ENCODE measurements at regions of chr19 and their contacts with region 1.

Region 1: GRCh38 chr19:56507446-56508289 is at the start of gene ZNF471:
- DNase-seq: peak; percentile 94 to 96
- ATAC-seq: peak; percentile 100
- H3K4me3 ChIP-seq: peak within 1 kb of the TSS; percentile 68 to 86 (median 78)
- H3K27ac ChIP-seq: peak within 1 kb of the TSS; percentile 87 to 97 (median 94)
- H3K4me1 ChIP-seq: peaks cover 5 to 10% of the 10 kb centered on the region in 2 donors
- H3K27me3 ChIP-seq: no peaks in the 10 kb centered on the region
- CTCF ChIP-seq: no peak
- POLR2A ChIP-seq: no peak
- total RNA-seq, gene ZNF471: 0.56 to 3.8 (median 3.2) TPM

Region 2: GRCh38 chr19:56140583-56141416 is 366.9 kb before region 1 on chr19 and contains the start of gene ZNF444:
- in situ Hi-C with region 1: no loop called
- intact Hi-C with region 1: loop called (anchors 2 kb)
- DNase-seq: peak; percentile 98 to 99
- ATAC-seq: peak; percentile 96
- H3K4me3 ChIP-seq: peak within 1 kb of the TSS; percentile 57 to 76 (median 60)
- H3K27ac ChIP-seq: peak within 1 kb of the TSS; percentile 84 to 89 (median 86)
- H3K4me1 ChIP-seq: peaks cover 11 to 21% of the 10 kb centered on the region in 2 donors
- H3K27me3 ChIP-seq: no peaks in the 10 kb centered on the region
- CTCF ChIP-seq: no peak
- POLR2A ChIP-seq: peak; percentile 52 to 54
- total RNA-seq, gene ZNF444: 16.4 to 38.9 (median 24.9) TPM

Region 3: GRCh38 chr19:56477429-56478338 is 30.0 kb before region 1 on chr19:
- in situ Hi-C with region 1: no loop called
- intact Hi-C with region 1: loop called (anchors 1 kb)
- DNase-seq: peak; percentile 71 to 73
- ATAC-seq: peak; percentile 87 to 95
- H3K4me3 ChIP-seq: peak overlapping the region; percentile 46 to 83 (median 69)
- H3K27ac ChIP-seq: peak overlapping the region; percentile 54 to 86 (median 83)
- H3K4me1 ChIP-seq: peaks cover 0 to 5% of the 10 kb centered on the region in 2 donors
- H3K27me3 ChIP-seq: no peaks in the 10 kb centered on the region
- CTCF ChIP-seq: no peak
- POLR2A ChIP-seq: peak; percentile 31 to 42

Region 4: DNA sequence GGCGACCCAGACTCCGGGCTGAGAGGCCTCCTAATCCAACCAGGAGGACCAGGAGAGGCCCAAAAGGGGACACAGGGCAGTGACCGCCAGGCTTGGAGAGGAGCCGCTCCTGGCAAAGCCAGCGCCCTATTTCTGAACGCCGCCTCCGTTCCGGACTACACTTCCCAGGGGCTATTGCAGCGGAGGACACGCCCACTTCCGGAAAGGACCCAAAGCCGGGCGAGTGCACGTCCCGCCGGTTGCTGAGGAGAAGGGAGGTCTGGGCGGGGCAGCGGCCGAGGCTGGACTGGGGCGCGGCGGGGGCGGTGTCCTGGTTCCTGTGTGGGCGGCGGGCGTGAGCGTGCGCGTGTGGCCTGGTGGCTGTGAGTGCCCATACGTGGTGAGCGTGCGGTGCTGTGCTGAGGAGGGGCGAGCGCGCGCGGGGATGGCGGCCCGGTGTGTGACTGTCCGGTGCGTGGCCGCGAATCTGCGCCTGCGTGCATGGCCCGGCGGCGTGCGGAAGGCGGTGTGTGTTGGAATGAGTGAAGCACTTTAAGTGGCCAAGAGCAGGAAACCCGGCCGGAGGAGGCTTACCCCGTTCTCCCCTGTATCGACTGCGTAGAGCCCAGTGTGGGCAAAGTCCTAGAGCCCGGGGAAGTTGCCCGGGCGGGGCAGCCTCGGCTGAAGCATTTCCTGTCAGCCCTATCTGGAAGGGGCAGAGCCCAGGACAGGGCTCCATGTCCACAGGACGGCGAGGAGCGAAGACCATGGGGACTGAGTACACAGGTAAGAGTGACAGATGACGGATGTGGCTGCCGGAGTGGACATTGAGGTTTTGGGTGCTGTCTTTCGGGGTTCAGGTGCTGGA is 59.8 kb after region 1 on chr19 and contains the start of gene ZNF470:
- in situ Hi-C with region 1: no loop called
- intact Hi-C with region 1: loop called (anchors 1 kb)
- DNase-seq: peak; percentile 90 to 92
- ATAC-seq: peak; percentile 99
- H3K4me3 ChIP-seq: peak within 1 kb of the TSS; percentile 80 to 98 (median 85)
- H3K27ac ChIP-seq: peak within 1 kb of the TSS; percentile 83 to 91 (median 86)
- H3K4me1 ChIP-seq: peaks cover 13 to 14% of the 10 kb centered on the region in 2 donors
- H3K27me3 ChIP-seq: no peaks in the 10 kb centered on the region
- CTCF ChIP-seq: peak in 1 of 5 experiments; percentile 5
- POLR2A ChIP-seq: peak; percentile 46 to 50
- total RNA-seq, gene ZNF470: 0.32 to 2.0 (median 0.83) TPM

Region 5: GRCh38 chr19:57632987-57633831 is 1125.5 kb after region 1 on chr19 and contains the start of gene ZNF211:
- in situ Hi-C with region 1: no loop called
- intact Hi-C with region 1: loop called (anchors 5 kb)
- DNase-seq: peak; percentile 82 to 92
- ATAC-seq: peak; percentile 100
- H3K4me3 ChIP-seq: peak within 1 kb of the TSS; percentile 85 to 96 (median 92)
- H3K27ac ChIP-seq: peak within 1 kb of the TSS; percentile 79 to 86 (median 86)
- H3K4me1 ChIP-seq: peaks cover 7 to 13% of the 10 kb centered on the region in 2 donors
- H3K27me3 ChIP-seq: no peaks in the 10 kb centered on the region
- CTCF ChIP-seq: no peak
- POLR2A ChIP-seq: no peak
- total RNA-seq, gene ZNF211: 2.9 to 5.5 (median 4.3) TPM

Measured in gastrocnemius medialis (tissue), 4 donors.